Activated CD8-positive, alpha-beta T cell treated with anti-CD3 and anti-CD28 coated beads for 36 hours (primary cell): ENCODE measurements at regions of chr18 and their contacts with region 1.

Region 1: GRCh38 chr18:13159579-13159978 is 59.0 kb upstream of the LDLRAD4 start:
- DNase-seq: peak; percentile 34
- ATAC-seq: peak; percentile 85
- H3K4me3 Mint-ChIP-seq: no peak overlapping the region
- H3K27ac Mint-ChIP-seq: no peak overlapping the region
- H3K4me1 Mint-ChIP-seq: peaks cover 2% of the 10 kb centered on the region
- H3K27me3 Mint-ChIP-seq: peaks cover 2% of the 10 kb centered on the region
- CTCF ChIP-seq: peak; percentile 92

Region 2: GRCh38 chr18:12726774-12727550 is 432.6 kb before region 1 on chr18:
- CTCF ChIA-PET with region 1: interaction called, 20 read pairs
- POLR2A ChIA-PET with region 1: no interaction called
- intact Hi-C with region 1: no loop called
- DNase-seq: peak; percentile 66
- ATAC-seq: peak; percentile 86
- H3K4me3 Mint-ChIP-seq: no peak overlapping the region
- H3K27ac Mint-ChIP-seq: no peak overlapping the region
- H3K4me1 Mint-ChIP-seq: peaks cover under 1% of the 10 kb centered on the region
- H3K27me3 Mint-ChIP-seq: no peaks in the 10 kb centered on the region
- CTCF ChIP-seq: peak; percentile 96

Region 3: GRCh38 chr18:13095466-13095865 is 64.1 kb before region 1 on chr18:
- CTCF ChIA-PET with region 1: interaction called, 10 read pairs
- POLR2A ChIA-PET with region 1: interaction called, 3 read pairs
- intact Hi-C with region 1: no loop called
- DNase-seq: no peak
- ATAC-seq: no peak
- H3K4me3 Mint-ChIP-seq: no peak overlapping the region
- H3K27ac Mint-ChIP-seq: no peak overlapping the region
- H3K4me1 Mint-ChIP-seq: no peaks in the 10 kb centered on the region
- H3K27me3 Mint-ChIP-seq: no peaks in the 10 kb centered on the region
- CTCF ChIP-seq: no peak

Region 4: GRCh38 chr18:13131283-13131682 is 28.3 kb before region 1 on chr18:
- CTCF ChIA-PET with region 1: interaction called, 13 read pairs
- POLR2A ChIA-PET with region 1: interaction called, 3 read pairs
- intact Hi-C with region 1: no loop called
- DNase-seq: no peak
- ATAC-seq: no peak
- H3K4me3 Mint-ChIP-seq: no peak overlapping the region
- H3K27ac Mint-ChIP-seq: no peak overlapping the region
- H3K4me1 Mint-ChIP-seq: peaks cover 10% of the 10 kb centered on the region
- H3K27me3 Mint-ChIP-seq: no peaks in the 10 kb centered on the region
- CTCF ChIP-seq: no peak

Region 5: DNA sequence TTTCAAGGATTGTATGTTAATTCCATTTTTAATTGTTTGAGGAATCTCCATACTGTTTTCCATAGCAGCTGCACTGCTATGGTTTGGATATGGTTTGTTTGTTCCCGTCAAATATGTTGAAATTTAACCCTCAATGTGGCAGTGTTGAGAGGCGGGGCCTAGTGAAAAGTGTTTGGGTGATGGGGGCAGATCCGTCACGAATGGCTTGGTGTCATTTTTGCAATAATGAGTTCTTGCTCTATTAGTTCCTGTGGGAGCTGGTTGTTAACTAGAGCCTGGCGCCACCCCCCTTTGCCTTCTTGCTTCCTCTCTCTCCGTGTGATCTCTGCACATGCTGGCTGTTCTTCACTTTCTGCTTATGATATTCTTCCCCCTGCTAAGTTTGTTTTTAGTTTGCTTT is 12.4 kb before region 1 on chr18:
- CTCF ChIA-PET with region 1: interaction called, 11 read pairs
- POLR2A ChIA-PET with region 1: no interaction called
- intact Hi-C with region 1: no loop called
- DNase-seq: no peak
- ATAC-seq: no peak
- H3K4me3 Mint-ChIP-seq: no peak overlapping the region
- H3K27ac Mint-ChIP-seq: no peak overlapping the region
- H3K4me1 Mint-ChIP-seq: peaks cover 3% of the 10 kb centered on the region
- H3K27me3 Mint-ChIP-seq: no peaks in the 10 kb centered on the region
- CTCF ChIP-seq: no peak